ENCODE measurements at regions of chr6 and their contacts with region 1.

Region 1: DNA sequence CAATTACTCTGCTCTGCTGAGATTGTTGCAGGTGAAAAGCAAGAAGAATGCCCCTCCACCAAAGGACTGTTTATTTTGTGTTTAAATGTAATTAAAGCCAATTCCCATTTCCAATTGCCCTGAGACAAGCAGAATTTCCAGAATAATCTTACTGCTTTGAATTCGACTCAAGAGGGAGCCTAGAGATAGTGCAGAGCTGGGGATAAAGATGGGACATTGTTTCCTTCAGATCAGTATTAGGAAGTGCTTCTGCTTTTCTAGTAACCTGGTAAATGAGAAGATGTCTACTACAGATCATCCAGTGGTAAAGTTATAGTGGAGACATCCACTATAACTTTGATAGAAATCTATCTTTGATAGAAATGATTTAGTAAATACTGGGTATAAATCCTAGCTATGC is 326.9 kb downstream of the UBE3D start:
- DNase-seq: no peak
- H3K4me3 ChIP-seq: no peak overlapping the region
- H3K27ac ChIP-seq: no peak overlapping the region
- H3K4me1 ChIP-seq: no peaks in the 10 kb centered on the region
- H3K27me3 ChIP-seq: no peaks in the 10 kb centered on the region
- CTCF ChIP-seq: no peak

Region 2: GRCh38 chr6:82365016-82365797 is 373.6 kb before region 1 on chr6:
- intact Hi-C with region 1: no loop called
- DNase-seq: peak in 1 of 2 donors; percentile 64
- H3K4me3 ChIP-seq: peak overlapping the region; percentile 70 to 74
- H3K27ac ChIP-seq: peak overlapping the region; percentile 78 to 79
- H3K4me1 ChIP-seq: peaks cover 0 to 20% (median 14%) of the 10 kb centered on the region in 4 donors
- H3K27me3 ChIP-seq: no peaks in the 10 kb centered on the region
- CTCF ChIP-seq: no peak

Region 3: GRCh38 chr6:82712852-82713251 is 25.9 kb before region 1 on chr6:
- intact Hi-C with region 1: no loop called
- DNase-seq: no peak
- H3K4me3 ChIP-seq: no peak overlapping the region
- H3K27ac ChIP-seq: no peak overlapping the region
- H3K4me1 ChIP-seq: no peaks in the 10 kb centered on the region
- H3K27me3 ChIP-seq: no peaks in the 10 kb centered on the region
- CTCF ChIP-seq: no peak

Region 4: DNA sequence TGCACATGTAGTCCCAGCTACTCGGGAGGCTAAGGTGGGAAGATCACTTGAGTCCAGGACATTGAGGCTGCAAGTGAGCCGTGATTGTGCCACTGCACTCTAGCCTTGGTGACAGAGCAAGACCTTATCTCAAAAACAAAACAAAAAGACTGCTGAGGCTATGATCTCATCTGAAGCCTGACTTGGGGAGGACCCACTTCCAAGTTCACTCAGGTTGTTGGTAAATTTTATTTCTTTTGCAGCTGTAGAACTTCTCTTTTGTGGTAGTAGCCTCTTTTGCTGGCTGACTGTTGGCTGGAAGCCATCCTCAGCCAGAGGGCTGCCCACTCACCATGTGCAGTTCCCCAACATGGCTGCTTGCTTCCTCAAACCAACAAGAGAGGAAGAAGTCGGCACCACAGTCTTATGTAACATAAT is 728.9 kb after region 1 on chr6:
- intact Hi-C with region 1: loop called (anchors 10 kb)
- DNase-seq: peak; percentile 73 to 74
- H3K4me3 ChIP-seq: no peak overlapping the region
- H3K27ac ChIP-seq: no peak overlapping the region
- H3K4me1 ChIP-seq: no peaks in the 10 kb centered on the region
- H3K27me3 ChIP-seq: no peaks in the 10 kb centered on the region
- CTCF ChIP-seq: no peak

Measured in tibial artery (tissue), 4 donors.